ENCODE measurements at regions of chr10 and their contacts with region 1.

Region 1: DNA sequence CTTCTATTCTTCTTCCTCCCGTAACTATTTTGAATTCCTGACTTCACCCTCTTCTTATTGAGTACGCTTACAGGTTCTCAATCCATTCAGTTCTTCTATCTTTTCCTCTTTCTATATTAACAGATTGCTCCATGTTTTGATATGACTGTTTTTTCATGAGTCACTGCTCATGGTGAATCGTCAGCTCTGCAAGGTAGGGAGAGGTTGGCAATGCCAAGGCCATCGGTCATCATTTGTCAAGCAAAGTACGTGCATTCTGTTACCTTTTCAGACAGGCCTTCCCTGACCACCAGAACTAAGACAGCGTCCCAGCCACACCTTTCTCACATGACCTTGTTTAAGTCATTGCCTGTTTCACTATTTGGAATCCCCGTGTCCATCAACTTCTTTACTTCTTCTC is 1001.9 kb upstream of the SORCS1 start:
- DNase-seq: no peak
- ATAC-seq: no peak
- H3K4me3 Mint-ChIP-seq: no peak overlapping the region
- H3K27ac Mint-ChIP-seq: no peak overlapping the region
- H3K4me1 Mint-ChIP-seq: no peaks in the 10 kb centered on the region
- H3K27me3 Mint-ChIP-seq: no peaks in the 10 kb centered on the region

Region 2: DNA sequence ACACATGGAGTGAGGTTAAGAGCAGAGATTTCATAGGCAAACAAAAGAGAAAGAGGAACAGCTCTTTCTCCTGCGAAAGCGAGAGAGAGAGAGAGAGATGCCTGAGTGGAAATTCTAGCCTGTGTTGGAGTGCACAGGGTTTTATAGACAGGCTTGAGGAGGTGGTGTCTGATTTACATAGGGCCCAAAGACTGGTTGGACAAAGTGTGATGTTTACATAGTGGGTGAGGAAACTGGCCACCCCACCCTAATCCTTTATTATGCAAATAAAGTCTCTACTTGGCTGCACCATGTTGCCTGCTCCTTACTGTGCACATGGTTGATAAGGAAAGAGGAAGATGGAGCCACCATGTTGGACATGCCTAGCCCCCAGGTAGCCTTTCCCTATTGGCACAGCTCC is 34.1 kb before region 1 on chr10:
- CTCF ChIA-PET with region 1: no interaction called
- POLR2A ChIA-PET with region 1: no interaction called
- intact Hi-C with region 1: no loop called
- DNase-seq: no peak
- ATAC-seq: no peak
- H3K4me3 Mint-ChIP-seq: no peak overlapping the region
- H3K27ac Mint-ChIP-seq: no peak overlapping the region
- H3K4me1 Mint-ChIP-seq: no peaks in the 10 kb centered on the region
- H3K27me3 Mint-ChIP-seq: no peaks in the 10 kb centered on the region

Region 3: GRCh38 chr10:108180878-108181277 is 14.5 kb after region 1 on chr10:
- CTCF ChIA-PET with region 1: no interaction called
- POLR2A ChIA-PET with region 1: no interaction called
- intact Hi-C with region 1: loop called in 1 of 2 experiments (anchors 1 kb)
- DNase-seq: no peak
- ATAC-seq: no peak
- H3K4me3 Mint-ChIP-seq: no peak overlapping the region
- H3K27ac Mint-ChIP-seq: no peak overlapping the region
- H3K4me1 Mint-ChIP-seq: no peaks in the 10 kb centered on the region
- H3K27me3 Mint-ChIP-seq: no peaks in the 10 kb centered on the region

Region 4: DNA sequence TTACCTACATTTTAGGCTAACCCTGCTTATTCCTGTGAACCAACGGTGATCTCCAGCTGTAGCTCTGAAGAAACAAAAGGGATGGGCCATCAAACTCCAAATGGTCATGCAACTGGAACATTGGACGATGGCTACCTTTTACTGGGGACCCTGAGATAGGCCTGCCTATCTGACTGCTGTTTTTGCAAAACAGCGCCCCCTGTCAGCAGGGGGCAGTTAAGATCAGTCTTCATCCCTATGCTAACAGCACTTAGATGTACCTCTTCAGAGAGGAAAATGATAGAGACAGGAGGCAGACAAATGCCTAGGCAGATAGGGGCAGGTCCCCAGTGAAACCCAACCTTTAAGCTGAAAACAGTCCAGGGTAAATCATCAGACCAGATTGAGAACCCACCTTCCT is 83.5 kb after region 1 on chr10:
- CTCF ChIA-PET with region 1: no interaction called
- POLR2A ChIA-PET with region 1: no interaction called
- intact Hi-C with region 1: no loop called
- DNase-seq: no peak
- ATAC-seq: no peak
- H3K4me3 Mint-ChIP-seq: no peak overlapping the region
- H3K27ac Mint-ChIP-seq: no peak overlapping the region
- H3K4me1 Mint-ChIP-seq: no peaks in the 10 kb centered on the region
- H3K27me3 Mint-ChIP-seq: no peaks in the 10 kb centered on the region